WTC11 (cell line): ENCODE measurements at regions of chr2 and their contacts with region 1.

Region 1: DNA sequence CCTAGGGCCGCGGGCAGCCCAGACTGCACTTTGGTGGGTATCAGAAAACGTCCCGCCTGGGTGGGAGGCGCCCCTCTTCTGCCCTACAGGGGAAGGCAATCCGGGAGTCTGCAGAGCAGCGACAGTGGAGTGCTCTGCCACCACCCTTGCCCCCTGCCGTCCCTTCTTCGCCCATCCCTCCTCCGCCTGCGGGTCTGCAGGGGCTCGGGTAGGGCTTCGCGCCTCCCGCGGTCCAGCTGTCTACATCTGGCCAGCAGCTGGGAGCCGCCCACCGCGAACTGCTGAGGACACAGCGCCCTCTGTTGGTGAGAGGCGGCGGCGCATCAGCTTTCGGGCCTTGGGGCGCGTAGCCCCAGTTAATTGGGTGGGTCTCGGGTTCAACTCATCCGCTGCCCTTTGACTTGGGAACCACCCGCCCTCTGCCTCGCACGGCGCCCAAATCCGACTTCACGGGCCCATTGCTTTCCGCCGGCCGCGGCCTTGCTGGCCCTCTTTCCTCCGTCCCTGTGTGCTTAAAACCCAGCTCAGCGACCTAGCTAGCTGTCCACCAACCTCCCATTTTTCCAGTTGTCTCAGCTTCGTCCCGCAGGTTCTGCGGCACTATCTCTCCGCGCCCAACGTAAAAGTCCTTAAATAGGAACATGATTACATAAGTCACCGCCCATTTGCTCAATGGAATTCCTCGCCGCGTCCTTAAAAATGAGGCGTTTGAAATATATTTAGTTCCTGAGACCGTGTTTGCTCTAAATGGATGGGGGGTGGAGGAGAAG is 17.6 kb downstream of the WNT10A start:
- DNase-seq: peak; percentile 94
- ATAC-seq: peak; percentile 72
- H3K4me3 Mint-ChIP-seq: peak overlapping the region; percentile 49
- H3K27ac Mint-ChIP-seq: no peak overlapping the region
- H3K4me1 Mint-ChIP-seq: peaks cover 24% of the 10 kb centered on the region
- H3K27me3 Mint-ChIP-seq: peaks cover 99% of the 10 kb centered on the region
- CTCF ChIP-seq: peak; percentile 98

Region 2: GRCh38 chr2:218370410-218371063 is 527.8 kb before region 1 on chr2:
- CTCF ChIA-PET with region 1: no interaction called
- POLR2A ChIA-PET with region 1: no interaction called
- DNase-seq: no peak
- ATAC-seq: no peak
- H3K4me3 Mint-ChIP-seq: no peak overlapping the region
- H3K27ac Mint-ChIP-seq: no peak overlapping the region
- H3K4me1 Mint-ChIP-seq: peaks cover 6% of the 10 kb centered on the region; the same call in 1 of the 2 replicates
- H3K27me3 Mint-ChIP-seq: no peaks in the 10 kb centered on the region
- CTCF ChIP-seq: no peak

Region 3: DNA sequence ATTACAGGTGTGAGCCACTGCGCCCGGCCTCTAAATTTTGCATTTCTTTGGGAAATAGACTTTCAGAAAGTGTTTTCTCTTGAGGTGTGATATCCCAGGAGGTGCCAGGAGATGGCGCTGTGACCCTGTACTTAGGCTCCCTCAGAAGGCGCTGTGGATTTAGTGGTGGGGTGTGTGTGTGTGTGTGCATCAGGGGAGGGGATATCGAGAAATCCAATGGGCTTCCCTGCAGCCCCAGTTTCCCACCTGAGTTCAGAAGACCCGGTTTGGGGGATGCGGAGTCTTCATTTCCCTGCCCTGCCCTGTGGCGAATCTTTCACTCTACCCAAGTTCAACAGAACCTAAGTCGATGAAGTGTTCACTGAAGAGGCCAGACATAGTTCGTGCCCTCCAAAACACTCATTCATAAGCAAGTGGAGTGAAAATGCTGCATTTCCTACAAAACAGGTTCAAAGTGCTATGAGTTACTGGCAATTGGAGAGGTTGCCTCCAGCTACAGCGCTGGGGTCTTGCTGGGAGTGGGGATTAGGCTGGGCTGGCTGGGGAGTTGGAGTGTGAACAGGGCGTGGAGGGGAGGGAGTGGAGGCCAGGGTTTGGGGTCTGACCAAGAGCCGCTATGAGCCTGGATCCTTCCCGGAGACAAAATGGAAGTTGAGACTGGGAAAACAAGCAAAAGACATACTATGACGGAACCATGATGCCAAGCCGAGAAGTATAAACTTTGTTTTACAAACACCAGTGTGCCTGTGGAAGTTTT is 45.2 kb before region 1 on chr2:
- CTCF ChIA-PET with region 1: interaction called, 39 read pairs
- POLR2A ChIA-PET with region 1: no interaction called
- DNase-seq: peak; percentile 83
- ATAC-seq: peak; percentile 80
- H3K4me3 Mint-ChIP-seq: no peak overlapping the region
- H3K27ac Mint-ChIP-seq: no peak overlapping the region
- H3K4me1 Mint-ChIP-seq: peaks cover 37% of the 10 kb centered on the region
- H3K27me3 Mint-ChIP-seq: peaks cover 60% of the 10 kb centered on the region
- CTCF ChIP-seq: peak; percentile 87

Region 4: GRCh38 chr2:218885981-218886947 is 12.0 kb before region 1 on chr2:
- CTCF ChIA-PET with region 1: interaction called, 422 read pairs
- POLR2A ChIA-PET with region 1: interaction called, 3 read pairs
- DNase-seq: no peak
- ATAC-seq: no peak
- H3K4me3 Mint-ChIP-seq: no peak overlapping the region
- H3K27ac Mint-ChIP-seq: no peak overlapping the region
- H3K4me1 Mint-ChIP-seq: no peaks in the 10 kb centered on the region
- H3K27me3 Mint-ChIP-seq: peaks cover 99% of the 10 kb centered on the region
- CTCF ChIP-seq: no peak

Region 5: DNA sequence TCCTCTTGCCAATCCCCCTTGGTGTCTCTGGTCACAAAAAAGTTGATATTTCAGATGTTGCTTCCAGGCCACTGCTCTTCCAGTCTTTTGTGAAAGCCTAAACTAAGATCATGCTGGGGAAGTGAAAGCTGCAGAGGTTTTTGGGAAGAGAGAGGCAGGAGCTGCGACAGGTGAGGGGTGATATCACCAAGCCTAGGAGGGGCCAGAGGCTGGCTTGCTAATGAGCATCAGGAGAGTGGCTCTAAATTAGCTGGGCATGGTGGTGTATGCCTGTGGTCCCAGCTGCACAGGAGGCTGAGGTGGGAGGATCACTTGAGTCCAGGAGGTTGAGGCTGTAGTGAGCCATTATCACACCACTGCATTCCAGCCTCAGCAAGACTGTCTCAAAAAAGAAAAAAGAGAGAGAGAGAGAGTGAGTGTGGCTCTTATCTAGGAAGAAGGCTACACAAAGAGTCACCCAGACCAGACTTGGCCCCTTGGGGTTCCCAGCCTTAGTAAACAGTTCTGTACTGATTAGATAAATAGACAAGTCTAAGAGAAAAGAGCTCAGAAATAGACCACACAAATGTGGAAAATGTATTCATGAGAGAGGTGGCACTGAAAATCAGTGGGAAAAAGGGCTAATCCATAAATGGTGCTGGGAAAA is 46.6 kb after region 1 on chr2:
- CTCF ChIA-PET with region 1: interaction called, 10 read pairs
- POLR2A ChIA-PET with region 1: no interaction called
- DNase-seq: no peak
- ATAC-seq: no peak
- H3K4me3 Mint-ChIP-seq: no peak overlapping the region
- H3K27ac Mint-ChIP-seq: no peak overlapping the region
- H3K4me1 Mint-ChIP-seq: no peaks in the 10 kb centered on the region
- H3K27me3 Mint-ChIP-seq: peaks cover 58% of the 10 kb centered on the region
- CTCF ChIP-seq: no peak

Region 6: DNA sequence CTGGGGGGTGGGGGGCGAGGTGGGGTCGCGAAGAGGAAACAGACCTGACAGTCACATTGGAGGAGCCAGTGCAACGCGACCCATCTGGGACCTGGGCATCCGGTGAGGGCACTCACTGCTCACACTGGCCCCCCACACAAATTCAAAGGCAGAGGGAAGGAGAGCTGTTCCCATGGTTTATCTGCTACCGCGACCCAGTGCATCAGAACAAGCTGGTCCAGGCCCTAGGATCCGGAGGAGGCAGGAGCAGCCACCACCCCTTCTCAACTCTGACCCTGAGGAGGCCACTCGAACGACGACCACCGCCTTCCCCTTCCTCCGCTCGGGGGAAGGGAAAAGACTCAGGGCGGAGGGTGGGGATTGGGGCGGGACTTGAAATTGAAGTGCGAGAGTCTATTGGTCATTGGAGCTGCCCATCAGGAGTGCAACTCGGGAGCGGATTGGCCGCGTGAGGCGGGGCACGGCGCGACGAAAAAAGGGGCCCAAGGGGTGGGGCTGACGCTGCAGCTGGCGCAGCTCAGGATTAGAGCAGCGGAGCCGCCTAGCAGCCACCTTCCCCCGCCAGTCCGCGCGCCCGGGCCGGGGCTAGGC is 60.9 kb after region 1 on chr2 and contains the start of gene CDK5R2:
- CTCF ChIA-PET with region 1: interaction called, 25 read pairs
- POLR2A ChIA-PET with region 1: no interaction called
- DNase-seq: peak; percentile 96
- ATAC-seq: peak; percentile 82
- H3K4me3 Mint-ChIP-seq: peak within 1 kb of the TSS; percentile 84
- H3K27ac Mint-ChIP-seq: no peak within 1 kb of the TSS
- H3K4me1 Mint-ChIP-seq: peaks cover 27% of the 10 kb centered on the region
- H3K27me3 Mint-ChIP-seq: peaks cover 95% of the 10 kb centered on the region
- CTCF ChIP-seq: no peak
- total RNA-seq, gene CDK5R2: 0.16 to 0.46 TPM (median 0.26 TPM) in 3 replicates

Region 7: DNA sequence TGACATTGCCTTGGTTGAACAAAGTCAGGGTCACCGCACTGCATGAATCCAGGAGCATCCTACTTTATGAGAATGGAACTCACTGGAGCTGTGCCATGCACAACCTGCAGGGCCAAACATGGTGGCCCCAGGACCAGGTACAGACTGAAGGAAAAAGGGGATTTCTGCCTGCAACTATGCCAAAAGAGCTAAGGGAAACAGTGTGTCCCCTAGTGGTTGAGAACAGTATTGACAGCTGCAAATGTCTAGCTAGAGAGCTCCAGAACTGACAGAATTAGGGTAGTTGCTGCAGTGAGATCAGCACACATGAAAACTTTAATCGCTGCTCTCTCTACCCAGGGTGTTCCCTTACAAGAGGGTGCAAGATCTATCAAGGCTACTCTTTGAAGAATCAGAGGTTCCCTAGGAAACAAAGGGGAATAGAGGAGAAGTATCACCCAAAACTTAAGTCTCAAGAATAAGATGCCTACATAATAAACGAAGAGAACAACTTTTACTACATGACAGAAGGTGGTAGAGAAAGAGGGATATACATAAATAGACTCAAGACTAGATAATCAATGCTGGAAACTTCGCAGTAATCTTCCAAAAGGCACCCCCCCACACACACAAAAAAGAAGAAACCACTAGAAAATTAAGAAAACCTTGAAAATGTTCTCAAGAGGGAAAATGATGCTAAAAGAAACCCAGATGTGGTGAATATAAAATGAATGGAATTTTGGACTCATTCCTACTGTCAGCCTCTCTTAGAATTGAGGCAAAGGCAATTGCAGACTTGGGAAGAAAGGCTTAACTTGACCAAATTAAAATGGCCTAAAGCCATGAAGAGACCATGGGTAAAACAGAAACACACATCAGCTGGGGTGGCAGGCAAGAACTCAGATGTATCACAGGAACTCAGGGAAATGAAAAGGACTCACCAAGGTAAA is 206.1 kb after region 1 on chr2:
- CTCF ChIA-PET with region 1: no interaction called
- POLR2A ChIA-PET with region 1: no interaction called
- DNase-seq: peak; percentile 41
- ATAC-seq: peak; percentile 98
- H3K4me3 Mint-ChIP-seq: no peak overlapping the region
- H3K27ac Mint-ChIP-seq: 0 out of 2 replicates have a peak overlapping the region, but pooled peaks have one; percentile 41
- H3K4me1 Mint-ChIP-seq: peaks cover 3% of the 10 kb centered on the region
- H3K27me3 Mint-ChIP-seq: no peaks in the 10 kb centered on the region
- CTCF ChIP-seq: peak; percentile 75